ENCODE measurements at regions of chr12 and their contacts with region 1.

Region 1: GRCh38 chr12:113424915-113425823 is 3.0 kb downstream of the SDSL start:
- DNase-seq: peak in 1 of 2 donors; percentile 63
- ATAC-seq: peak; percentile 44

Region 2: DNA sequence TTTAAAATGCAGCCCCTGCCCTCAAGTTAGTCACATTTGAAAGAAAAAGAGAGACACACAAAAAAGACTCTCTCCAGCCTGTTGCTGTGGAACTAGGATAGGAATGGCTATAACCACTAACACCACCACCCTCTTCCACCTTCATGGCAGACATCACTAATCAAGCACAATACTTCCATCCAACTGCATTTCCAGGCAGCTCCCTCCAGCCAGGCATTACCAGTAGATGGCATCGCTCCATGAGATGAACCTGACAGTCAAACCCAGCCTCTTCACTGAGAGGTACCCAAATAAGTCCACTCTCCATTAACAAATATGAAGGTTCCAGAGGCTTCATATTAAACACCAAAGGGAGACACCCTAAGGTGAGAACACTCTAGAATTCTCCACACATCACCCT is 114.7 kb before region 1 on chr12:
- intact Hi-C with region 1: loop called in 1 of 2 experiments (anchors 5 kb)
- DNase-seq: no peak
- ATAC-seq: peak; percentile 45

Region 3: DNA sequence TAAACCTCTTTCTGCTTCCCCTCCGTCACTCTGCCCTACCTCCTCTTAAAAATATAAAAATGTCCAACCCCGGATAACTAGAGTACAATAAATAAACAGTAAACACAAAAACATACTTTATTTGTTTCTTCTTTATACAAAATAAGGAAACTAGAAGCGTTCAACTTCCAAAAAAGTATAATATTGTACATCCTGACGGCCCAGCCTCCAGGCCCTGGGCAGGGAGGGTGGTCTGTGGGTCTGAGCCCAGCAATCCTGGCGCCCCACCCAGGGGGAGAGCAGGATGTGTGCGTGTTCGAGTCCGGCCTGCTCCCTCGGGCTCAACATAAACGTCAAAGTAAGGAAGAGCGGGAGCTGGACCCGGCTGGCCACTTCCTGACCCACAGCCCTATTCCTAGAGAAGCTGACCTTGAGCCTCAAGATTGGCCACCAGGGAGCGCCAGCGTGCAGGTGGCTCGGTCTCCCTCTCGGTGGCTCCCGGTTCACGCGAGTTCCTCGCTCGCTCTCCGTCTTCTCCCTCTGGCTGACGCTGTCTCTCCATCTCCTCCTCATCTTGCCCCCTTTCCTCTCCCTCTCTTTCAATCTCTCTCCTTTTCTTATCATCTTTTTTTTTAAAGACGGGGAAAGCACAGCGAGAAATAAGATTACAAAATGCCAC is 37.1 kb after region 1 on chr12:
- intact Hi-C with region 1: no loop called
- DNase-seq: peak; percentile 50 to 86
- ATAC-seq: peak; percentile 95

Measured in left colon (tissue), 2 donors.